WTC11 (cell line): ENCODE measurements at regions of chr15 and their contacts with region 1.

Region 1: GRCh38 chr15:65318870-65319356 is 14.4 kb downstream of the RNU5B-1 start:
- DNase-seq: peak; percentile 89
- ATAC-seq: peak; percentile 96
- H3K4me3 Mint-ChIP-seq: no peak overlapping the region
- H3K27ac Mint-ChIP-seq: no peak overlapping the region; the same call in 1 of the 2 replicates
- H3K4me1 Mint-ChIP-seq: no peaks in the 10 kb centered on the region
- H3K27me3 Mint-ChIP-seq: no peaks in the 10 kb centered on the region; the same call in 1 of the 2 replicates
- CTCF ChIP-seq: peak; percentile 93

Region 2: DNA sequence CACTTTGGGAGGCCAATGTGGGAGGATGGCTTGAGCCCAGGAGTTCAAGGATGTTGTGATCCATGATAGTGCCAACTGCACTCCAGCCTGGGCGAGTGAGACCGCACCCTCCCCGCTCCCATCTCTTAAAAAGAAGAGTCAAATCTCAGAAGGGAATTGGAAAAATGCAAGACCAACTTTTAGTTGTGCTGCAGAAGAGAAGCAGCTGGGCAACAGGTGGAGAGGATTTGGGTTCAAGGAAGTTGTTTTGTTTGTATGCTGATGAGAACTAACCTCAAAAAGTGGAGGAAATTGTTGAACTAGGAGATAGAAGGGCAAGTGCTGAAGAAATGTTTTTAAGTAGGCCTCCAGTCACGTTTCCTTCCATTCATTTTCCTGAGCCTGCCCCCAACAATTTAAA is 172.5 kb before region 1 on chr15:
- CTCF ChIA-PET with region 1: no interaction called
- POLR2A ChIA-PET with region 1: no interaction called
- DNase-seq: no peak
- ATAC-seq: no peak
- H3K4me3 Mint-ChIP-seq: no peak overlapping the region
- H3K27ac Mint-ChIP-seq: peak overlapping the region; percentile 14; the same call in 1 of the 2 replicates
- H3K4me1 Mint-ChIP-seq: no peaks in the 10 kb centered on the region; the same call in 1 of the 2 replicates
- H3K27me3 Mint-ChIP-seq: no peaks in the 10 kb centered on the region
- CTCF ChIP-seq: no peak

Region 3: DNA sequence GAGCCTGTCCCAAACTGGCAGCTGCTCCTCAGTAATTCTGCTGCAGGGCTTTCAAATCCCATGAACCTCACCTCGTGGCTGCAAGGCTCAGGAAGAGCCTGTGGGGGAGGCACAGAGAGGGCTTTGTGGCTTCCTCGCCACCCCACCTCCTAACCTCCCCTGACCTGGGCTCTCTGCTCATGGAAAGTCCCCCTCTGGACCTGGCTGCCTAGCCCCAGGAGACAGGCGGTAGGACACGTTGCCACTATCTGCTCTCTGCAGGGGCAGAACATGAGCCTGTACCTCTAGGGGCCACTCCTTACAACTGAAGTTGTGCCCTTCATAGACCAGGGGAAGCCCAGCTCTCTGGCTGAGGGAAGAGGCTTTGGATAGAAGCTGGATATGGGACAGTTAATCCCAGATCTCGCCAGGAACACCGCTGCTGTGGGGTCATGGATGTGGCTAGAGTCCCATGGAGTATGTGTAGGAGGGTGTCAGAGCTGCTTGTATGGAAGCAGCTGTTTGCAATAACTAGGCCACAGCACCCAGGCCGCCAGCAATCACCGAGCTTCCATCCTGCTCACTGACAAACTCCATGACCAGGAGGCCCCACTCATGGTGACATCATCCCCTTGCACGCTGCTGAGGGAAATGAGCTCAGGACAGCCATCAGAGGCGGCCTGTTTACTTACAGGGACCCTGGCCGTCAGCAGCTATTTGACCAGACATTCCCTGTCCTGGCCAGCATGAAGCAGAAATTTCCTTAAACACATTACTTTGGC is 73.6 kb before region 1 on chr15:
- CTCF ChIA-PET with region 1: no interaction called
- POLR2A ChIA-PET with region 1: no interaction called
- DNase-seq: no peak
- ATAC-seq: no peak
- H3K4me3 Mint-ChIP-seq: no peak overlapping the region
- H3K27ac Mint-ChIP-seq: no peak overlapping the region
- H3K4me1 Mint-ChIP-seq: peaks cover 10% of the 10 kb centered on the region
- H3K27me3 Mint-ChIP-seq: no peaks in the 10 kb centered on the region
- CTCF ChIP-seq: no peak

Region 4: GRCh38 chr15:65361708-65362459 is 43.0 kb after region 1 on chr15:
- CTCF ChIA-PET with region 1: interaction called, 22 read pairs
- POLR2A ChIA-PET with region 1: no interaction called
- DNase-seq: peak; percentile 48
- ATAC-seq: peak; percentile 60
- H3K4me3 Mint-ChIP-seq: peak overlapping the region; percentile 40
- H3K27ac Mint-ChIP-seq: peak overlapping the region; percentile 8; the same call in 1 of the 2 replicates
- H3K4me1 Mint-ChIP-seq: peaks cover 60% of the 10 kb centered on the region
- H3K27me3 Mint-ChIP-seq: peaks cover 20% of the 10 kb centered on the region
- CTCF ChIP-seq: no peak

Region 5: GRCh38 chr15:65368302-65369211 is 49.6 kb after region 1 on chr15:
- CTCF ChIA-PET with region 1: interaction called, 22 read pairs
- POLR2A ChIA-PET with region 1: no interaction called
- DNase-seq: peak; percentile 69
- ATAC-seq: peak; percentile 58
- H3K4me3 Mint-ChIP-seq: peak overlapping the region; percentile 14; the same call in 1 of the 2 replicates
- H3K27ac Mint-ChIP-seq: peak overlapping the region; percentile 92
- H3K4me1 Mint-ChIP-seq: peaks cover 73% of the 10 kb centered on the region
- H3K27me3 Mint-ChIP-seq: no peaks in the 10 kb centered on the region
- CTCF ChIP-seq: no peak

Region 6: GRCh38 chr15:65377104-65377975 is 58.4 kb after region 1 on chr15:
- CTCF ChIA-PET with region 1: interaction called, 175 read pairs
- POLR2A ChIA-PET with region 1: interaction called, 3 read pairs
- DNase-seq: peak; percentile 74
- ATAC-seq: peak; percentile 41
- H3K4me3 Mint-ChIP-seq: peak overlapping the region; percentile 94
- H3K27ac Mint-ChIP-seq: no peak overlapping the region; the same call in none of the 2 replicates
- H3K4me1 Mint-ChIP-seq: peaks cover 44% of the 10 kb centered on the region
- H3K27me3 Mint-ChIP-seq: peaks cover 24% of the 10 kb centered on the region
- CTCF ChIP-seq: no peak

Region 7: DNA sequence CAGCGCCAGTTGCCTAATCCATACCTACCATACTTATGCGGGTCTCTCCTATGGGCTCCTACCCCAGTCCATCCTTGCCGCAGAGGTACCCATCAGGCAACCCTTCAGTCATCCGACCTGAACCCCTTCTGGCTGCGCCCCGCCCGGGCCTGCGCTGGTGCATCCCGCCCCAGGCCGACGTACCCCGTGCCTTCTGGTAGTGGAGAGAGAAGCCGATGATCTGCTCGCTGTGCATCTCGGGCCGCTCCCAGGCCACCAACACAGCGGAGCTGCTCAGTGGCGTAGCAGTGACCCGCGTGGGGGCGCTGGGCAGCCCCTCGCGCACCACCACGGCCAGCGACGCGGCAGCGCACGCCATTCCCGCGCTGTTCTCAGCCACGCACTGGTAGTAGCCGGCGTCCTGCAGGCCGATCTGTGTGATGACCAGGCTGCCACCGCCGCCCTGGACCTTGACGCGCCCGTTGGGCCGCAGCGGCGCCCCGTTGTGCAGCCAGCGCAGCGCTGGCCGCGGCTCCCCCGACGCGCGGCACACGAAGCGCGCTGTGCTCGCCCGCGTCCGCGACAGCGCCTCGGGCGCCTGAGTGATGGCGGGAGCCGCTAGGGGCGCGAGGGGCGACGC is 76.8 kb after region 1 on chr15:
- CTCF ChIA-PET with region 1: interaction called, 175 read pairs
- POLR2A ChIA-PET with region 1: no interaction called
- DNase-seq: peak; percentile 43
- ATAC-seq: peak; percentile 24
- H3K4me3 Mint-ChIP-seq: peak overlapping the region; percentile 35
- H3K27ac Mint-ChIP-seq: no peak overlapping the region
- H3K4me1 Mint-ChIP-seq: peaks cover 14% of the 10 kb centered on the region
- H3K27me3 Mint-ChIP-seq: peaks cover 43% of the 10 kb centered on the region
- CTCF ChIP-seq: no peak

Region 8: DNA sequence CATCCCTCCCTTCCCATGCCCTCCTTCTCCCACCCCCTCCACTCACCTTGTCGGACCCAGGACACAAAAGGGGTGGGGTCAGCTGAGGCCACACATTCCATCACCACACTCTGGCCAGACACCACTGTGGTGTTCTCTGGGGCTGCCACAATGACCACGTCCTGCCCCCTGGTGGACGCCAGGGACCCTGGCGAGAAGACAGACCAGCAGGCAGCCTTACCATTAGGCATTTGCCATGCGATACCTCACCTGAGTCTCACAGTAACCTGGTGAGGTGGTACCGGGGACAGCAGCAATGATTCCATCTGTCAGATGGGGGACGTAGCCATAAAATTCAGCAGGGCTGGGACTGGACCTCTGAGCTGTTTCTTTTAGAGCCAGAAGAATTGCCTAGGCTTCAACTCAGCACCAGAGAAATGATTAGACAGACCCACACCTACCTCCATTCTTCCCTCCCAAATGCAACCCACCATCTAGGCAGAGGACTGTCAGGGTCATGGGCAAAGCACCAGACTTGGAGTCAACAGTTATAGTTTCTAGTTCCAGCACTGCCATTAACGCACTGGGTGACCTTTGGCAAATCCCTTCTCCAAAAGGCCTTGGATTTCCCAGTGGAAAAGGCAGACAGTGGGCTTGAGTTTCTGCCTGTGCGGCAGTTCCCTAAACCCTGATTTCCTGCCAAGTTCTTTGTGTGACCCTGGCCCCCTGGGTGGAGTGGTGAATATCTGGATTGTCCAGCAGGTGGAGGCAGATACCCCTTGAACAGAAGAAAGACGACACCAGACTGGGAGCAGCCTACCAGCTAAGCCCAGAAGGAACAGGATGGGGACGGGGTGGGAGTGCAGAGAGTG is 82.1 kb after region 1 on chr15:
- CTCF ChIA-PET with region 1: interaction called, 35 read pairs
- POLR2A ChIA-PET with region 1: no interaction called
- DNase-seq: peak; percentile 92
- ATAC-seq: peak; percentile 83
- H3K4me3 Mint-ChIP-seq: no peak overlapping the region
- H3K27ac Mint-ChIP-seq: peak overlapping the region; percentile 95
- H3K4me1 Mint-ChIP-seq: peaks cover 42% of the 10 kb centered on the region
- H3K27me3 Mint-ChIP-seq: peaks cover 24% of the 10 kb centered on the region
- CTCF ChIP-seq: peak; percentile 74

Region 9: DNA sequence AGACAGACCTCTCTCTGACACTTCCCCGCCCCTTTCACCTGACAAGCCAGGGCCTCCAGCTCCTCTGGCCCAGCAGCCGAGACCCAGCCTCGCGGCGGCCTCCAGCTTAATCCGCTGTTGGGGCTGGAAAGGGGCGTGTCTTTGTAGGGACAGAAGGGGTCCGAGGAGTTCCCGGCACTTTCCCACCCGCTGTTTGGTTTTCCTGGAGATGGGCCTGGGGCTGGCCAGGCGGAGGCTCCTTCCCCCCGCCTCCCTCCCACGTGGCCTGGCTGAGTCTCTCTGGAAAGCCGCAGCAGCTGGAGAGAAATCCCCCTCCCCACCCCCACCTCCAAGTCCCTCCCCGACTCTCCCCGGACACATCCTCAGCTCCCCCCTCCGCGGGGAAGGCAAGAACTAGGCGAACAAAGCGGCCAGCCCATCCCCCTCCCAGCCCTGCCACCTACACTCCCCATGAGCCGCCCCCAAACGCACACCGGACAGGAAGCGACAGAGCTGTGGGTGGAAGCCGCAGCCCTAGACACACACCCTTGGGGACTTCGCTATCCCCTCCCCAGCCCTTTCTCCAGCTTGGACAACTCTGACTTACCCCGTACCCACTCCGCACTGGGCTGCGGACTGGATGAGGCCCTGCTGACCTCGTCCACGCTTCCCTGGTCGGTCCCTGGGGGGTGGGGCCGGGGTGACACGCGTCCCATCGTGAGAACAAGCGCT is 102.6 kb after region 1 on chr15:
- CTCF ChIA-PET with region 1: interaction called, 14 read pairs
- POLR2A ChIA-PET with region 1: no interaction called
- DNase-seq: peak; percentile 96
- ATAC-seq: peak; percentile 71
- H3K4me3 Mint-ChIP-seq: peak overlapping the region; percentile 98
- H3K27ac Mint-ChIP-seq: peak overlapping the region; percentile 93
- H3K4me1 Mint-ChIP-seq: peaks cover 77% of the 10 kb centered on the region
- H3K27me3 Mint-ChIP-seq: peaks cover 20% of the 10 kb centered on the region
- CTCF ChIP-seq: no peak